Activated CD8-positive, alpha-beta memory T cell treated with anti-CD3 and anti-CD28 coated beads, Interleukin-2, amount 10 ng/mL, durations not matched to agents 7 days and 5 days (primary cell): ENCODE measurements at regions of chr2 and their contacts with region 1.

Region 1: GRCh38 chr2:200901459-200902072 is 12.4 kb downstream of the NIF3L1 start:
- DNase-seq: peak; percentile 89
- ATAC-seq: peak; percentile 100
- H3K4me3 Mint-ChIP-seq: no peak overlapping the region
- H3K27ac Mint-ChIP-seq: peak overlapping the region; percentile 72
- H3K4me1 Mint-ChIP-seq: peaks cover 25% of the 10 kb centered on the region
- H3K27me3 Mint-ChIP-seq: no peaks in the 10 kb centered on the region

Region 2: GRCh38 chr2:200713003-200713703 is 188.4 kb before region 1 on chr2:
- CTCF ChIA-PET with region 1: interaction called, 11 read pairs
- DNase-seq: peak; percentile 98
- ATAC-seq: peak; percentile 99
- H3K4me3 Mint-ChIP-seq: peak overlapping the region; percentile 61
- H3K27ac Mint-ChIP-seq: peak overlapping the region; percentile 96
- H3K4me1 Mint-ChIP-seq: peaks cover 23% of the 10 kb centered on the region
- H3K27me3 Mint-ChIP-seq: no peaks in the 10 kb centered on the region

Region 3: GRCh38 chr2:200820573-200821234 is 80.9 kb before region 1 on chr2:
- CTCF ChIA-PET with region 1: no interaction called
- DNase-seq: no peak
- ATAC-seq: no peak
- H3K4me3 Mint-ChIP-seq: no peak overlapping the region
- H3K27ac Mint-ChIP-seq: no peak overlapping the region
- H3K4me1 Mint-ChIP-seq: peaks cover 20% of the 10 kb centered on the region
- H3K27me3 Mint-ChIP-seq: no peaks in the 10 kb centered on the region

Region 4: GRCh38 chr2:200845669-200846325 is 55.8 kb before region 1 on chr2:
- CTCF ChIA-PET with region 1: no interaction called
- DNase-seq: no peak
- ATAC-seq: no peak
- H3K4me3 Mint-ChIP-seq: no peak overlapping the region
- H3K27ac Mint-ChIP-seq: no peak overlapping the region
- H3K4me1 Mint-ChIP-seq: peaks cover 2% of the 10 kb centered on the region
- H3K27me3 Mint-ChIP-seq: peaks cover 4% of the 10 kb centered on the region

Region 5: GRCh38 chr2:200888704-200889625 is 12.6 kb before region 1 on chr2 and contains the starts of genes NIF3L1 and PPIL3:
- CTCF ChIA-PET with region 1: interaction called, 15 read pairs
- DNase-seq: peak; percentile 99
- ATAC-seq: peak; percentile 78
- H3K4me3 Mint-ChIP-seq: peak within 1 kb of the TSS; percentile 89
- H3K27ac Mint-ChIP-seq: peak within 1 kb of the TSS; percentile 97
- H3K4me1 Mint-ChIP-seq: peaks cover 52% of the 10 kb centered on the region
- H3K27me3 Mint-ChIP-seq: no peaks in the 10 kb centered on the region
- total RNA-seq, gene NIF3L1: 28.3 to 37.6 TPM
- total RNA-seq, gene PPIL3: 40.2 to 41.5 TPM

Region 6: GRCh38 chr2:201158111-201158929 is 256.8 kb after region 1 on chr2:
- CTCF ChIA-PET with region 1: interaction called, 21 read pairs
- DNase-seq: peak; percentile 74
- ATAC-seq: peak; percentile 84
- H3K4me3 Mint-ChIP-seq: no peak overlapping the region
- H3K27ac Mint-ChIP-seq: peak overlapping the region; percentile 84
- H3K4me1 Mint-ChIP-seq: peaks cover 14% of the 10 kb centered on the region
- H3K27me3 Mint-ChIP-seq: no peaks in the 10 kb centered on the region

Region 7: GRCh38 chr2:201182650-201183364 is 281.2 kb after region 1 on chr2 and contains the start of gene CASP10:
- CTCF ChIA-PET with region 1: interaction called, 48 read pairs
- DNase-seq: peak; percentile 48
- ATAC-seq: peak; percentile 82
- H3K4me3 Mint-ChIP-seq: peak within 1 kb of the TSS; percentile 94
- H3K27ac Mint-ChIP-seq: peak within 1 kb of the TSS; percentile 88
- H3K4me1 Mint-ChIP-seq: peaks cover 55% of the 10 kb centered on the region
- H3K27me3 Mint-ChIP-seq: no peaks in the 10 kb centered on the region
- total RNA-seq, gene CASP10: 26.6 to 37.4 TPM